Activated naive CD4-positive, alpha-beta T cell treated with anti-CD3 and anti-CD28 coated beads for 36 hours (primary cell): ENCODE measurements at regions of chr19 and their contacts with region 1.

Region 1: DNA sequence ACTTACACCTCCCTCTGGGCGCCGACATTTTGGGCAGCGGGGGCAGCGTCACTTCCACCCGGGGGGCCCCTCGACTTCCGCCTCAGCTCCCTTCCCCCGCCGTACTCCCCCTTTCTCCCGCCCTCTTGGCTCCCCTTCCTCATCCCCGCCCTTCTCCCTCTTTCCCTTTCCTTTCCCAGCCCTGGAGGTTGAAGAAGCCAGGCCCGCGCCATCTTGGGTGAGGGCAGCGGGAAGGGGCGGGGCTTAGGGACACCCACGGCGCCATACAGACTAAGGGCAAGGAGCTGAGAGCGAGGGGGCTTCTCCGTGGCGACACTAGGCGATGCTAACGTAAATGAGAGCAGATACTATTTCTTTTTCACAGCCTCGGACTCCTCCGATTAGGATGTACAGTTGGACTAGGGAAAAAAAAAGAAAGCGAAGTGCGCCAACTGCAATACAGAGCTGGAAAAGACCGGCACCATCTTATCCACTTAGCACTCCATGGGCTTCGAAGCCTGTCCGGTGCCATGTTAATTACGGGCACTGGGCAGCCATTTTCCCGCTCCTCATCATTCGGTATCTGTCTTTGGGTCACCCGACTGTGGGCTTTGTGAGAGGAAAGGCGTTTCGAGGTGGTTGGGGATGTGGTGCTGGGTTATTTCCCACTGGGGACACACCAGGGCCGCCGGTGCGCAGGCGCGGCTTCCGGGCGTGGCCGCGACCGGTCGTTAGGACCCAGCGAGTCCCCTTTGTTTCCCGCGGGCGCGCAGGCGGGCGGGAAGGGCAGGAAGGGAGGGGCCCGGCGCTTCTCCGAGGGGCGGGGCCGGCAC is at the start of gene FIZ1:
- DNase-seq: peak; percentile 98
- H3K4me3 Mint-ChIP-seq: peak within 1 kb of the TSS; percentile 88
- H3K27ac Mint-ChIP-seq: peak within 1 kb of the TSS; percentile 99
- H3K4me1 Mint-ChIP-seq: peaks cover 31% of the 10 kb centered on the region
- H3K27me3 Mint-ChIP-seq: no peaks in the 10 kb centered on the region
- total RNA-seq, gene FIZ1: 12.8 to 14.8 TPM

Region 2: DNA sequence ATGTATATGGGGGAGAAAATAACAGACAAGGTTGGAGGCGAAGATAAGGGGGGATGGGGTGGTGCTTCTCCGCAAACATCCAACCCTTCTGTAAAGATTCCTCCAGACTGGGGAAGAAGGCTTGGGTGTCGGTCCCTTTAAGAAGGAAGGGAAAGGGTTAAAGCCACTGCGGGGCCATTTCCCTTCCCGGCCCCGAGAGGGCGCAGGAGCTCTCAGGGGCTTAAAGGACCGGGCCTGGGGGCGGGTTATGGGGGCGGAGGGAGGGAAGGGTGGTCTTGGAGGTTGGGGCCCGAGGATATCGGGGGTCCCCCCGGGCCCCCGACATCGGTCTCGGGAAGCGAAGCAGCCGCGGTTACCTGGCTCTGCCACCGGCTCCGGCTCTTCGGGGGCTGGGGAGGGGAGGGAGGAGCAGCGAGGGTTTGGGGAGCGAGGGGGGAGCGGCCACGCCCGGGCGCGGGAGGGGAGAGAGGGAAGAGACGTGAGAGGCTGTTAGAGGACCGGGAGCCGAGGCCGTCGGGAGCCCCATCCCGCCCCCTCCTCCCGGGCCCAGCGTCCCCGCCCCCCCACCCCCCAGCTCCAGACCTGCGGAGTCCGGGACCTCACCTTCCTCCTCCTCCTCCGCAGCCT is 453.5 kb before region 1 on chr19:
- CTCF ChIA-PET with region 1: no interaction called
- intact Hi-C with region 1: loop called (anchors 10 kb)
- DNase-seq: no peak
- H3K4me3 Mint-ChIP-seq: no peak overlapping the region
- H3K27ac Mint-ChIP-seq: no peak overlapping the region
- H3K4me1 Mint-ChIP-seq: peaks cover 6% of the 10 kb centered on the region
- H3K27me3 Mint-ChIP-seq: peaks cover 55% of the 10 kb centered on the region

Region 3: GRCh38 chr19:55447421-55448174 is 152.1 kb before region 1 on chr19:
- CTCF ChIA-PET with region 1: no interaction called
- intact Hi-C with region 1: no loop called
- DNase-seq: no peak
- H3K4me3 Mint-ChIP-seq: no peak overlapping the region
- H3K27ac Mint-ChIP-seq: no peak overlapping the region
- H3K4me1 Mint-ChIP-seq: peaks cover 13% of the 10 kb centered on the region
- H3K27me3 Mint-ChIP-seq: peaks cover 45% of the 10 kb centered on the region

Region 4: DNA sequence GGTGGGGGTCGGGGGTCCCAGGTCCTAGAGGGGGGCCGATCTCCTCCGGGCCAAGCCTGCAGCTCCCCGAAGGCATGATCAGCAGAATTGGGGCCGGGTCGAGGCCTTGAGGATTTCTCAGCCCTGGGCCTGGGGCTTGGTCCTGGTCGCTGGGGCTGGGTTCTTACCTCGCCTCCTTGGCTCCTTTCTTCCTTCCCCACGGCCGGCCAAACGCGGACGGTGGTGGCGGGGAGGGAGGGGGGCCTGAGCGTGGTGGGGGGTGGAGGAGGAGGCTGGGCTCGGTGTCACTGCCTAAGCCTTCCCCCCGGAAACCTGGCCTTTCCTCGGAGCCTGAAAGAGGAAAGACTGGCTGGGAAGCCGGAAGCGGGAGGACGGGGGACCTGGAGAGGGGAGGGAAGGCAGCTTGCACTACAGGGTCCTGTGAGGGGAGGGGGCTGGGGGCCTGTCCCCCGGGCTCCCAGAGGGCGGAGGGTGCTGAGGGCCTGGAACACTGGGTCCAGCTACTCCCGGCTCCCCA is 19.0 kb before region 1 on chr19 and contains the start of gene ZNF579:
- CTCF ChIA-PET with region 1: interaction called, 3 read pairs
- intact Hi-C with region 1: loop called (anchors 2 kb)
- DNase-seq: peak; percentile 89
- H3K4me3 Mint-ChIP-seq: peak within 1 kb of the TSS; percentile 76
- H3K27ac Mint-ChIP-seq: peak within 1 kb of the TSS; percentile 72
- H3K4me1 Mint-ChIP-seq: peaks cover 27% of the 10 kb centered on the region
- H3K27me3 Mint-ChIP-seq: no peaks in the 10 kb centered on the region
- total RNA-seq, gene ZNF579: 6.1 to 6.5 TPM

Region 5: DNA sequence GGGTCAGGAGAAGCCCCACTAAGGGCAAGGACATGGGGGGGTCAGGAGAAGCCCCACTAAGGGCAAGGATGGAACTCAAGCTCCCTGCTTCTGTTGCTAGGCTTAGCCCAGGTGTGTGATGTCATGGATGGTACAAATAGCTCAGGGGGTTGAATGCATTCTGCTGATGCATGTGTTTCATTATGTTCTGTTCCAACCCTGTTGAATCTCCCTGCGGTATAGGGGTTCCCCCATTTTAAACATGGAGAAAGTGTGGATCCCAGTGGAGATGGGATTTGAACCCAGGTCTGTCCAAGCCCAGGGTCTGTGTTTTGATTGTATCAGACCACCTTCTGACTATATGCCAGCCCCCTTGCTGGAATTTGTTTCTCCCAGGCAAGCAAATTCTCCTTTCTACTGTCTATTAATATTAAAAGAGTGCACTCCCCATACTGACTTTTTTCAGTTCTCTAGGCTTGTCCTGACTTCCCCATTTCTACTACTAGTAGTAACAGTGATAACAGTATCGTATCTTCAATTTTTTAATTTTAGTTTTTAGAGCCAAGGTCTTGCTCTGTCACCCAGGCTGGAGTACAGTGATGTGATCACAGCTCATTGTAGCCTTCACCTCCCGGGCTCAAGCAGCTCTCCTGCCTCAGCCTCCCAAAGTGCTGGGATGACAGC is 12.4 kb after region 1 on chr19:
- CTCF ChIA-PET with region 1: no interaction called
- intact Hi-C with region 1: no loop called
- DNase-seq: no peak
- H3K4me3 Mint-ChIP-seq: no peak overlapping the region
- H3K27ac Mint-ChIP-seq: no peak overlapping the region
- H3K4me1 Mint-ChIP-seq: peaks cover 44% of the 10 kb centered on the region
- H3K27me3 Mint-ChIP-seq: no peaks in the 10 kb centered on the region

Region 6: GRCh38 chr19:55624109-55625003 is 24.7 kb after region 1 on chr19 and contains the start of gene ZNF784:
- CTCF ChIA-PET with region 1: interaction called, 4 read pairs
- intact Hi-C with region 1: loop called (anchors 1 kb)
- DNase-seq: peak; percentile 93
- H3K4me3 Mint-ChIP-seq: peak within 1 kb of the TSS; percentile 92
- H3K27ac Mint-ChIP-seq: peak within 1 kb of the TSS; percentile 95
- H3K4me1 Mint-ChIP-seq: peaks cover 56% of the 10 kb centered on the region
- H3K27me3 Mint-ChIP-seq: no peaks in the 10 kb centered on the region
- total RNA-seq, gene ZNF784: 3.7 to 4.0 TPM

Region 7: DNA sequence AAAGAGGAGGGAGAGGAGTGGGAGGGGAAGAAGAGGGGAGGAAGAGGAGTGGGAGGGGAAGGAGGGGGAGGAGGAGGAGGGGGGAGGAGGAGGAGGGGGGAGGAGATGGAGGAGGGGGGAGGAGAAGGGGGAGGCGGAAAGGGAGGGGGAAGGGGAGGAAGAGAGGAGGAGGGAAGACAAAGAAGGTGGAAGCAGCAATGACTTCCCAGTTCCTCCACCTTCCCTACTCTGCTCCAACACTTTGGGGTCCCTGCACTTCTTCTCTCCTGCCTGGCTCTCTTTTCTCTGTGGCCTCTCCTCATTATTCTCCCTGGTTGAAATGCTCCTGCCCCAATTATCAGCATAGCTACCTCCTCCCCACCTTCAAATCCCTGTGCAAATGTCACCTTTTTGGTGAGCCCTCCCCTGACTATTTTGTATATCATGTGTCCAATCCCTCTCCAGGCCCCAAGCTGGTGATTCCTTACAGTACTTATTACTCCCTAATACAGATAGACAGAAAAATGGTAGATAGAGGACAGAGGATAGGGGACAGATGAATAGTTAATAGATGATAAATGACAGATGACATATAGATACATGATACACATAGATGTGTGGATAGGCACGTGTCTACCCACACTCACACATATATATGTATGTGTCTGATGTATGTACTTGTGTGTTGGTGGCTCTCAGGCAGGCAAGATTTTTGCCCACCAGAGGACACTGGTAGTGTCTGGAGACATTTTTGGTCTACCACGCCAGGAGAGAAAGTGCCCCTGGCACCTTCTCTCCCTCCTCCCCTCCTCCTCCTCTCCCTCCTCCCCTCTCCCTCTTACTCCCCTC is 113.3 kb after region 1 on chr19:
- CTCF ChIA-PET with region 1: no interaction called
- intact Hi-C with region 1: no loop called
- DNase-seq: no peak
- H3K4me3 Mint-ChIP-seq: no peak overlapping the region
- H3K27ac Mint-ChIP-seq: no peak overlapping the region
- H3K4me1 Mint-ChIP-seq: no peaks in the 10 kb centered on the region
- H3K27me3 Mint-ChIP-seq: peaks cover 19% of the 10 kb centered on the region

Region 8: GRCh38 chr19:56140583-56141416 is 541.1 kb after region 1 on chr19 and contains the start of gene ZNF444:
- CTCF ChIA-PET with region 1: no interaction called
- intact Hi-C with region 1: loop called (anchors 1 kb)
- DNase-seq: peak; percentile 99
- H3K4me3 Mint-ChIP-seq: peak within 1 kb of the TSS; percentile 97
- H3K27ac Mint-ChIP-seq: peak within 1 kb of the TSS; percentile 95
- H3K4me1 Mint-ChIP-seq: peaks cover 35% of the 10 kb centered on the region
- H3K27me3 Mint-ChIP-seq: no peaks in the 10 kb centered on the region
- total RNA-seq, gene ZNF444: 17.8 to 21.4 TPM